Heart right ventricle (tissue), 16 donors: ENCODE measurements at regions of chr1 and their contacts with region 1.

Region 1: DNA sequence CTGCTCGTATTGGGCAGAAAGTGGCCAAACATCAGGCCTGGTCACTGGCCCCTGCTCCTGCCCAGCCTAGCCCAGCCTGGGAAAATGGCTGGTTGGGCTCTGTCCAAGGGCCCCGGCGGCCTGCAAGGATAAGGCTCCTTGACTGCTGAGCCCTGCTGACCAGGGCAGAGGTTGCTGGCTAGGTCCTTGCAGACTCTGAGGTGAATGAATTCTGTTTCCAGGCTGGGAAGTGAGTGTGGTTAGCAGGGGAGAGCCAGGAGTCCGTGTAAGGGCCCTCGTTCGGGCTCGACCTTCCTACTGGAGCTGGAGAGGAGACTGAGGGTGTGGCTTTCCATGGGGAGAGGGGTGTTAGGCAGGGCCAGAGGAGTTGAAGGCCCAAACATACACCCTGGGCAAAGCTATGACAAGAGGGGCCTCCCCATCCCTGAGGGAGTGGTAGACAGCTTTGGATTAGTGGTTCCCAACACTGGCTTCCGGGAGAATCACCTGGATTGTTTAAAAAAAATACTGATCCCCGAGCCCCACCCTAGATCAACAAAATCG is 20.6 kb downstream of the CSF1 start:
- DNase-seq: peak; percentile 88 to 91
- ATAC-seq: peak; percentile 74 to 89 (median 82)
- H3K4me3 ChIP-seq: no peak overlapping the region
- H3K27ac ChIP-seq: peak overlapping the region; percentile 14 to 84 (median 79)
- H3K4me1 ChIP-seq: peaks cover 32 to 80% (median 68%) of the 10 kb centered on the region in 9 donors
- H3K27me3 ChIP-seq: no peaks in the 10 kb centered on the region
- CTCF ChIP-seq: no peak

Region 2: DNA sequence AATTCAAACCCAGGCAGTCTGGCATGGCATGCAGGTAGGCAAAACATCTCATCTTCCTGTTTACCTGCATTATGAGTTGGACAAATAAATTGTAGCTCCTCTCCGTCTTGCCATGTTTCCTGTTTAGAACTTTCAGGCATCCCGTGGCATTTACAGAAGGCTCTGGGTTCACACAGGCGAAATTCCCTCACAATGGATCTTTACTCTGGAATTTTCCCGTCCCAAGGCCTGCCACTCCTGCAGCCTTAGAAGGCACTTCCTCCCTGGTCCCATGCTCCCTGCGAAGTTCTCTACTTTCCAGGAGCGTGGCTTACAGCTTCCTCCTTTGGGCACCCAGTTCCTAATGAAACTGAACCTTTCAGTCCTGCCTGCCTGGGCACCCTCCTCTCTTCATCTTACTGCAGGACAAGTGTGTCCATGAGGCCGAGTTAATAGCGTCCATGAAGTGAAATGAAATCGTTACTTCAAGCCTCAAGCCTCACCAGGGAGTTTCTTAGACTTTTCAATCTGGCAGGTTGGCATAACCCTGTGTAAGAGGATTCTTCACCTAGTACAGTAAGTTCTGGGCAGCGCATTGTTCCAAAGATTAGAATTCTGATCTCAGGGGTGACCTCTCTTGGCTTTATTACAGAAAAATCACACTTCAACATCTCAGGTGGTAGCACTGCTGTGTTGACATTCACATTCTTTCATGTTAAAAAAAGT is 16.5 kb after region 1 on chr1:
- intact Hi-C with region 1: loop called in 1 of 10 experiments (anchors 1 kb)
- DNase-seq: no peak
- ATAC-seq: peak in 4 of 8 donors; percentile 19 to 49 (median 40)
- H3K4me3 ChIP-seq: no peak overlapping the region
- H3K27ac ChIP-seq: peak overlapping the region in 6 of 10 donors; percentile 6 to 68 (median 23)
- H3K4me1 ChIP-seq: peaks cover 0 to 20% (median 8%) of the 10 kb centered on the region in 9 donors
- H3K27me3 ChIP-seq: no peaks in the 10 kb centered on the region
- CTCF ChIP-seq: no peak

Region 3: DNA sequence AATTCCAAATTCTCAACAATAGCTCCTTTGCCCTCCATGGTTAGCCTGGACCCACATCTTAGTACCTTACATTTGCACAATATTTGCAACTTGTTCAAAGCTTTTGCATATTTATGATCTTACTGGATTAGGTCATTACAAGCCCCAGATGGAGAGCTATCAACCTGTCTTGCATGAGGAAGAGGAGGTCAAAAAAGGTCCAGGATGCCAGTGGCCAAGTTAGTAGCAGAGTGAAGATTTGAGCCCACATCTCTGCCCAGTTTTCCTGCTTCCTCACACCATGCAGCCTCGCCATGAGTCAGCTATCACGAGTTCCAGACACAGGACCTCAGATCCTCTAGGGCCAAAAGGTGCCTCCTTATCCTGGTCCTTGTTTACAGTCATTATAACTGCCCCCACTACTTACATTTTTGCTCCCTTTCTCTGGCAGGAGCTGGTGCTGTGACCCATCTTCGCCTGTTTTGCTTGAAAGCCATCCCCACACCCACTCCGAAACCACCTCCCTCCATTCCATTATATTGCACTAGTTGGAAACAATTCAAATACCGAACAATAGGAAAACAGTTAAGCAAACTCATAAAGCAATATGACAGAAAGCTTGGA is 48.3 kb after region 1 on chr1:
- intact Hi-C with region 1: loop called in 7 of 10 experiments (anchors 5 to 10 kb)
- DNase-seq: no peak
- ATAC-seq: no peak
- H3K4me3 ChIP-seq: no peak overlapping the region
- H3K27ac ChIP-seq: peak overlapping the region in 2 of 10 donors; percentile 16 to 58
- H3K4me1 ChIP-seq: peaks cover 3 to 59% (median 35%) of the 10 kb centered on the region in 9 donors
- H3K27me3 ChIP-seq: no peaks in the 10 kb centered on the region
- CTCF ChIP-seq: no peak